Heart left ventricle (tissue), 16 donors: ENCODE measurements at regions of chr11 and their contacts with region 1.

Region 1: DNA sequence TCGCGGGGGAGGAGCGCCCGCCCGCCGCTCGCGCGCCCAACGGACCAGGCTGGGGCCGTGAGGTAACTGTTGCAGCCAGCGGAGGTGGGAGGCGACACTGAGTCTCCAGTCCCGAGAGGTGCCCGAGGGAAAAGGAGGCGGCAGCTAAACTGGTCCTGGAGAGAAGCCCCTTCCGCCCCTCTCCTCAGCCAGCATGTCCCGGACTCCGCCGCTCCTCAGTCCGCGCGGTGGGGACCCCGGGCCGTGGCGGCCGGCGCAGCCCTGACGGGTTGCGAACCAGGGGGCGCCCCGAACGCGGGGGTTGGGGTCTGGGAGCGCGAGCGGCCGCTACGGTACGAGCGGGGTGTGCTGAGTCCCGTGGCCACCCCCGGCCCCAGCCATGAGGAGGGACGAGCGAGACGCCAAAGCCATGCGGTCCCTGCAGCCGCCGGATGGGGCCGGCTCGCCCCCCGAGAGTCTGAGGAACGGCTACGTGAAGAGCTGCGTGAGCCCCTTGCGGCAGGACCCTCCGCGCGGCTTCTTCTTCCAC is at the start of gene PDE3B:
- DNase-seq: peak; percentile 82 to 91 (median 87)
- ATAC-seq: peak; percentile 92 to 96 (median 95)
- H3K4me3 ChIP-seq: peak within 1 kb of the TSS; percentile 77 to 91 (median 85)
- H3K27ac ChIP-seq: peak within 1 kb of the TSS; percentile 63 to 94 (median 84)
- H3K4me1 ChIP-seq: peaks cover 0 to 34% (median 1%) of the 10 kb centered on the region in 12 donors
- H3K27me3 ChIP-seq: no peaks in the 10 kb centered on the region
- CTCF ChIP-seq: peak in 1 of 12 donors; percentile 6
- POLR2A ChIP-seq: peak; percentile 32 to 48
- total RNA-seq, gene PDE3B: 7.5 to 17.0 (median 10.4) TPM

Region 2: GRCh38 chr11:14537134-14537599 is 106.6 kb before region 1 on chr11:
- intact Hi-C with region 1: loop called in 9 of 10 experiments (anchors 2 to 10 kb)
- DNase-seq: no peak
- ATAC-seq: no peak
- H3K4me3 ChIP-seq: peak overlapping the region in 1 of 12 donors; percentile 23
- H3K27ac ChIP-seq: peak overlapping the region in 4 of 12 donors; percentile 42 to 74 (median 54)
- H3K4me1 ChIP-seq: peaks cover 0 to 45% (median 29%) of the 10 kb centered on the region in 12 donors
- H3K27me3 ChIP-seq: no peaks in the 10 kb centered on the region
- CTCF ChIP-seq: peak; percentile 66 to 86 (median 78)
- POLR2A ChIP-seq: no peak

Region 3: DNA sequence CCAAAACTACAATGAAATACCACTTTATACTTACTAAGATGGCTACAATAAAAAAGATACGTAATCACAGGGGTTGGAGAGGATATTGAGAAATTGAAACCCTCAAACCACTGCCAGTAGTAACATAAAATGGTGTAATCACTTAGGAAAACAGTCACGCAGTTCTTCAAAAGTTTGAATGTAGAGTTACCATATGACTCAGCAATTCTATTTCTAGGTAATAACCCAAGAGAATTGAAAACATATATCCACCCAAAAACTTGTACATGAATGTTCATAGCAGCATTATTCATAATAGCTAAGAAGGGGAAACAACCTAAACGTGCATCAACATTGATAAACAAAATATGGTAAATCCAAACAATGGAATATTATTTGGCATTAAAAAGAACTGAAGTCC is 99.2 kb before region 1 on chr11:
- intact Hi-C with region 1: loop called in 9 of 10 experiments (anchors 2 to 10 kb)
- DNase-seq: no peak
- ATAC-seq: no peak
- H3K4me3 ChIP-seq: no peak overlapping the region
- H3K27ac ChIP-seq: no peak overlapping the region
- H3K4me1 ChIP-seq: peaks cover 0 to 40% (median 17%) of the 10 kb centered on the region in 12 donors
- H3K27me3 ChIP-seq: no peaks in the 10 kb centered on the region
- CTCF ChIP-seq: no peak
- POLR2A ChIP-seq: no peak

Region 4: DNA sequence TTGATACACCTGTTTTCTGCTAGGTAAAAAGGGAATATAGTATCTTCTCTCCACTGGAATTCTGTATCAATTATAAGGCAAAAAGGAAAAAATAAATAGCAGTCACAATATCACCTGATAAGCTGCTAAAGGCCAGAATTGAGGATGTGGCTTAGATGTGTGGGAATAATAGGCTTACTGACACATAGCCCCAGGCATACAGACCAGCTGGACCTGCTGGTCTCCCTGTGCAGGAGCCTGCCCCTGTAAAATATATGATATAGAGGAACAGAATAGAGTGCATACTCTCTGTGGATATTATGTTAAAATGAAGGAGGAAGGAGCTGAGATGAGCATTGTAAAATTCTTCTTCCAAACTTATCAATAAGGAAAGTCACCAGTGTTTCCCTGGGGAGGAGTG is 37.0 kb before region 1 on chr11:
- intact Hi-C with region 1: no loop called
- DNase-seq: no peak
- ATAC-seq: no peak
- H3K4me3 ChIP-seq: no peak overlapping the region
- H3K27ac ChIP-seq: no peak overlapping the region
- H3K4me1 ChIP-seq: peaks cover 0 to 4% (median 0%) of the 10 kb centered on the region in 12 donors
- H3K27me3 ChIP-seq: no peaks in the 10 kb centered on the region
- CTCF ChIP-seq: no peak
- POLR2A ChIP-seq: no peak

Region 5: DNA sequence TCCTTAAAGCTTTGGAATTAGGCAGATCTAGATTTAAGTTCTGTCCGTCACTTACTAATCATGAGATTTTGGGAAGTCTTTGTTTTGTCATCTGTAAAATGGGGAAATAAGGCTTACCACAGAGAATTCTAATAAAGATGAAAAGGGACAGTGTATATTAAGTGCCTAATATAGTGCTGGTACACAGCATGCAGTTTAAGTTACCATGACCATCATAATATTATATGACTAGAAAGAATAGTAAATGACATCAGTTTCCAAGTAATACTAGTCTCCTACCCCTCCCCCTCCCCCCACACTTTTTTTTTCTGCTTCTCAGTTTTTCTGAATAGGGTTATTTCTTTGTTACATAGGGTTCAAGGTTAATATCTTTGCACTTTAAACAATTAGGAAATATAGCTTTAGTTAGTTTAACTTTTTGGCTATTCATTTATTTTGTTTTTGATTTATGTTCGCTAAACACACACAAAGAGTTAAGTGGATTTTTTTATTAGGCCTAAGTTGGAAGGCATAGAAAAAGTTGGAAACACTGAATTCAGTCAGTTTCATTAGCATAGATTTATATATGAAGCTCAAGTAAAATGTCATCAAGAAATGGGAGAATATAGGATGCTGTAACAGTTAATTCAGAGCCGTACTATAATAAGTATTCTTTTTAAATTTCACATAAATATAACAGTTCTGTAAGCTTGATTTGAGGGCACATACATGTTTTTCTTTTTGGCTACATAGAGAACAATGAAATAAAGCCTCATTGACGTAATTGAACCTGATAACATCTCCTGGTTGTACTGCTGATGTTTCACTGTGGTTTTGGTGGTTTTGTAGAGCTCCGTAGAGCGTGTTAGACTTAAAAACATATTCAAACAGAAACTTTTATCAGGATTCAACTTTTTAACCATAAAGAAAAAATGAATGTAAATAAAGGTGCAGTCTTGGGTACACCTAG is 121.1 kb after region 1 on chr11:
- intact Hi-C with region 1: loop called in 2 of 10 experiments (anchors 2 to 5 kb)
- DNase-seq: no peak
- ATAC-seq: no peak
- H3K4me3 ChIP-seq: no peak overlapping the region
- H3K27ac ChIP-seq: peak overlapping the region in 1 of 12 donors; percentile 40
- H3K4me1 ChIP-seq: peaks cover 0 to 5% (median 0%) of the 10 kb centered on the region in 12 donors
- H3K27me3 ChIP-seq: no peaks in the 10 kb centered on the region
- CTCF ChIP-seq: no peak
- POLR2A ChIP-seq: no peak

Region 6: DNA sequence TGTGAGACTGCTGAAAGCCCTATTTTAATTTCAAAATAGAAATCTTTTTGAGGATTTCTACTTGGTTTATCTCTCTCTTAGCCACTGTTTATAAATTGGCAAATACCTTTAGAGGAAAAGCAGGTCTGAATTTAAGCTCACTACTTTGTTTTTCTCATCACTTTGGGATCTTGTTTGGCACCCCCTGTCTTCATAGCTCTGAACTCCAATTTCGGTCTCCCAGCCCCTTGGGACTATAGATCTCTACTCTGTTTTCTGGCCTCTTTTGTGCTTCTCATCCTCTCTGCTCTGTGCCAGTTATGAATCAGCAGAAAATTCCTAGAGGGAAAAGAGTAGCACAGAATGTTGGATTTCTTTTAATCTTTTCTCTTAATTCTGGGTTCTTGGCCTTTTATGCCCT is 130.0 kb after region 1 on chr11:
- intact Hi-C with region 1: loop called in 1 of 10 experiments (anchors 5 kb)
- DNase-seq: no peak
- ATAC-seq: no peak
- H3K4me3 ChIP-seq: no peak overlapping the region
- H3K27ac ChIP-seq: no peak overlapping the region
- H3K4me1 ChIP-seq: peaks cover 0 to 7% (median 0%) of the 10 kb centered on the region in 12 donors
- H3K27me3 ChIP-seq: no peaks in the 10 kb centered on the region
- CTCF ChIP-seq: peak in 3 of 12 donors; percentile 10 to 15 (median 12)
- POLR2A ChIP-seq: no peak